Motor neuron (in vitro differentiated cells): ENCODE measurements at regions of chr7 and their contacts with region 1.

Region 1: GRCh38 chr7:139570119-139570518 is 46.6 kb downstream of the CLEC2L start:
- ATAC-seq: peak in 1 of 8 experiments; percentile 48
- H3K4me3 ChIP-seq: no peak overlapping the region
- H3K27ac ChIP-seq: no peak overlapping the region
- H3K4me1 ChIP-seq: no peaks in the 10 kb centered on the region

Region 2: DNA sequence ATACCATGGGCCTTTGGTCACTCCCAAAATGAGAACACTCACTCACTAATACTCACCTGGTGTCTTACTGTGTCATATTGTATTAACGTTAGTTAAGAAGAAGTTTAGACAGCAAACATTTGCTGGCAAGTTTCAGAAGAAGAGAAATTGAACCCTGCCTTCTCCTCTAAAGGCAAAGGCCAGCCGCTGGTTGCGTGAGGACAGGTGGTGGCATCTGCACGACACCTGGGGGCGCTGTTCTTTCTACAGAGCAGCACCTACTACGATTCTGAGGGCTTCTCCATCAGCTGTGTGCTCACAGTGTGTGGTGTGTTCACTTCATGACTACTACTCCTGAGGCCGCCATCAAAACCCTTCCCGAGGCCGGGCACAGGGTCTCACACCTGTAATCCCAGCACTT is 64.6 kb before region 1 on chr7:
- in situ Hi-C with region 1: loop called in 1 of 9 experiments (anchors 10 kb)
- ATAC-seq: peak in 1 of 8 experiments; percentile 22
- H3K4me3 ChIP-seq: no peak overlapping the region
- H3K27ac ChIP-seq: no peak overlapping the region
- H3K4me1 ChIP-seq: no peaks in the 10 kb centered on the region